ENCODE measurements at regions of chr3 and their contacts with region 1.

Region 1: GRCh38 chr3:157865352-157866000 is 240.7 kb downstream of the SHOX2 start:
- DNase-seq: peak; percentile 52
- H3K4me3 Mint-ChIP-seq: no peak overlapping the region
- H3K27ac Mint-ChIP-seq: no peak overlapping the region
- H3K4me1 Mint-ChIP-seq: no peaks in the 10 kb centered on the region
- H3K27me3 Mint-ChIP-seq: no peaks in the 10 kb centered on the region

Region 2: GRCh38 chr3:158434412-158435038 is 569.0 kb after region 1 on chr3:
- CTCF ChIA-PET with region 1: interaction called, 18 read pairs
- DNase-seq: peak; percentile 45
- H3K4me3 Mint-ChIP-seq: no peak overlapping the region
- H3K27ac Mint-ChIP-seq: no peak overlapping the region
- H3K4me1 Mint-ChIP-seq: no peaks in the 10 kb centered on the region
- H3K27me3 Mint-ChIP-seq: no peaks in the 10 kb centered on the region

Measured in activated naive CD4-positive, alpha-beta T cell treated with anti-CD3 and anti-CD28 coated beads, Interleukin-2, amount 10 ng/mL, durations not matched to agents 7 days and 5 days (primary cell).